ENCODE measurements at regions of chr15 and their contacts with region 1.

Region 1: GRCh38 chr15:42581272-42581730 is 5.9 kb downstream of the STARD9 start:
- DNase-seq: peak; percentile 78 to 79
- H3K4me3 ChIP-seq: peak overlapping the region; percentile 31
- H3K4me3 Mint-ChIP-seq: peak overlapping the region; percentile 73
- H3K27ac Mint-ChIP-seq: no peak overlapping the region
- H3K4me1 ChIP-seq: 0 out of 2 replicates have a peak, but pooled peaks cover 7% of the 10 kb centered on the region
- H3K4me1 Mint-ChIP-seq: peaks cover 7% of the 10 kb centered on the region
- H3K27me3 ChIP-seq: no peaks in the 10 kb centered on the region
- H3K27me3 Mint-ChIP-seq: peaks cover 34% of the 10 kb centered on the region
- CTCF ChIP-seq: no peak

Region 2: GRCh38 chr15:42364529-42364928 is 216.8 kb before region 1 on chr15:
- CTCF ChIA-PET with region 1: no interaction called
- POLR2A ChIA-PET with region 1: no interaction called
- intact Hi-C with region 1: no loop called
- DNase-seq: no peak
- H3K4me3 ChIP-seq: no peak overlapping the region
- H3K4me3 Mint-ChIP-seq: no peak overlapping the region
- H3K27ac Mint-ChIP-seq: no peak overlapping the region
- H3K4me1 ChIP-seq: no peaks in the 10 kb centered on the region
- H3K4me1 Mint-ChIP-seq: peaks cover 5% of the 10 kb centered on the region
- H3K27me3 ChIP-seq: no peaks in the 10 kb centered on the region
- H3K27me3 Mint-ChIP-seq: peaks cover 3% of the 10 kb centered on the region
- CTCF ChIP-seq: no peak

Region 3: GRCh38 chr15:42449770-42450424 is 131.4 kb before region 1 on chr15:
- CTCF ChIA-PET with region 1: no interaction called
- POLR2A ChIA-PET with region 1: no interaction called
- intact Hi-C with region 1: no loop called
- DNase-seq: no peak
- H3K4me3 ChIP-seq: no peak overlapping the region
- H3K4me3 Mint-ChIP-seq: no peak overlapping the region
- H3K27ac Mint-ChIP-seq: no peak overlapping the region
- H3K4me1 ChIP-seq: no peaks in the 10 kb centered on the region
- H3K4me1 Mint-ChIP-seq: no peaks in the 10 kb centered on the region
- H3K27me3 ChIP-seq: no peaks in the 10 kb centered on the region
- H3K27me3 Mint-ChIP-seq: no peaks in the 10 kb centered on the region
- CTCF ChIP-seq: no peak

Region 4: GRCh38 chr15:42591238-42591934 is 10.1 kb after region 1 on chr15:
- CTCF ChIA-PET with region 1: interaction called, 12 read pairs
- POLR2A ChIA-PET with region 1: no interaction called
- intact Hi-C with region 1: no loop called
- DNase-seq: no peak
- H3K4me3 ChIP-seq: no peak overlapping the region
- H3K4me3 Mint-ChIP-seq: no peak overlapping the region
- H3K27ac Mint-ChIP-seq: no peak overlapping the region
- H3K4me1 ChIP-seq: peaks cover 3% of the 10 kb centered on the region; the same call in 1 of the 2 replicates
- H3K4me1 Mint-ChIP-seq: no peaks in the 10 kb centered on the region
- H3K27me3 ChIP-seq: no peaks in the 10 kb centered on the region
- H3K27me3 Mint-ChIP-seq: no peaks in the 10 kb centered on the region
- CTCF ChIP-seq: peak; percentile 28 to 36

Region 5: DNA sequence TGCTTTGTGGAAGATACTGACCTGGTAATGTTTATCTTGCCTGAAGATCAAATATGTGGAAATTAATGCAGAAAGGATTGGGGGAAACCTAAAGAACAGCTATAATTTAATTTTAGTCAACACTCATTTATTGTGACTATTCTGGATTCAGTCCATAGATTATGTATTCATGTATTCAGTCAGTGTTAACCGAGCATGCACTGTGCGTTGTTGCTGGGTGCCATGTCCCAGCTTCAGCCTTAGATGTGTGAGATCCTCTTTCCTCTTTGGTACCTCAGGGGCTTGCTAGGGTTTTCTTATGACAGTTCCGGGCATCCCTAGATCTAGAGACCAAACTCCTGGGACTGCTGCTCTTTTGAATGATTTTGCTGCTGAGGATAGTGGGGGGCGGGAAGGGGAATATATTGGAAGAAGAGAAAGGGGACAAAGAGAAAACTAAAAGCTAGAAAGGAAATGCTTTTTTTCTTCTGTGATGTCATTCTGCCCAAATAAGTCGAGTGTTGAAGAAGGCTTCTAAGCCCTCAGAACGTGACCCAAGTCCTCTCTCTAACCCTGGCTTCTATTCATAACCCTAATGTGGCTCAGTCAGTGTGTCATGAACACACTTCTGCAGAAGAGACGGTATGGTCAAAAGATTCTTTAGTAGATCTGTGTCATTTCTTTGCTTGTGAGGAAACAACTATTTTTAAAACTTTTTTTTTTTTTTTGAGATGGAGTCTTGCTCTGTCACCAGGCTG is 27.6 kb after region 1 on chr15:
- CTCF ChIA-PET with region 1: no interaction called
- POLR2A ChIA-PET with region 1: no interaction called
- intact Hi-C with region 1: no loop called
- DNase-seq: no peak
- H3K4me3 ChIP-seq: no peak overlapping the region
- H3K4me3 Mint-ChIP-seq: no peak overlapping the region
- H3K27ac Mint-ChIP-seq: no peak overlapping the region
- H3K4me1 ChIP-seq: no peaks in the 10 kb centered on the region
- H3K4me1 Mint-ChIP-seq: no peaks in the 10 kb centered on the region
- H3K27me3 ChIP-seq: no peaks in the 10 kb centered on the region; the same call in 1 of the 2 replicates
- H3K27me3 Mint-ChIP-seq: peaks cover 3% of the 10 kb centered on the region
- CTCF ChIP-seq: no peak

Measured in Caco-2 (cell line).